Heart right ventricle (tissue), 16 donors: ENCODE measurements at regions of chr3 and their contacts with region 1.

Region 1: GRCh38 chr3:28328188-28329151 is 20.1 kb upstream of the ZCWPW2 start:
- DNase-seq: no peak
- ATAC-seq: peak in 2 of 8 donors; percentile 29 to 52
- H3K4me3 ChIP-seq: no peak overlapping the region
- H3K27ac ChIP-seq: no peak overlapping the region
- H3K4me1 ChIP-seq: peaks cover 0 to 9% (median 0%) of the 10 kb centered on the region in 9 donors
- H3K27me3 ChIP-seq: no peaks in the 10 kb centered on the region
- CTCF ChIP-seq: peak; percentile 51 to 86 (median 77)

Region 2: DNA sequence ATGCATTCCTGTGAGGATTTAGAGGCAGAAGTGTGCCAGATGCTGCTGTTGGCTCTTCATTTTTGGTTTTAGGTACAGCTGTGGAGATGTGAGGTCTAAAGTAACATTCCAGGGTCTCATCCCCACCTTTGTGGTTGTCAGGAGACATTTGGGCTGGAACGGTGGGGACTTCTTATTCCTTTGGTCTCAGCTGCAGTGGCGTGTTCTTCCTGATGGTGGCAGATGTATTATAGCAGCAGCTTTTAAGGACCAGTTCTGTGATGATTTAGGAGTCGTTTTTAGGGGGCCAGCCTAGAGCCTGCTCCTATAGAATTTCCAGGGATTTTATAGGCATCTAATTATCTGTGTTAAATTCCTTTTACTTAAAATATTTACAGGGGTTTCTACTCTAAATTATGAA is 385.4 kb before region 1 on chr3:
- intact Hi-C with region 1: loop called in 1 of 10 experiments (anchors 10 kb)
- DNase-seq: no peak
- ATAC-seq: no peak
- H3K4me3 ChIP-seq: no peak overlapping the region
- H3K27ac ChIP-seq: no peak overlapping the region
- H3K4me1 ChIP-seq: no peaks in the 10 kb centered on the region
- H3K27me3 ChIP-seq: no peaks in the 10 kb centered on the region
- CTCF ChIP-seq: peak in 6 of 9 donors; percentile 11 to 45 (median 29)